H1 (cell line): ENCODE measurements at regions of chr3 and their contacts with region 1.

Region 1: GRCh38 chr3:13229273-13229949 is 156.2 kb upstream of the IQSEC1 start:
- DNase-seq: peak in 1 of 2 experiments; percentile 59
- H3K4me3 ChIP-seq: no peak overlapping the region
- H3K27ac ChIP-seq: no peak overlapping the region
- H3K4me1 ChIP-seq: peaks cover 0 to 3% (median under 1%) of the 10 kb centered on the region in 4 experiments; a peak in 2 of 7 replicates
- H3K27me3 ChIP-seq: no peaks in the 10 kb centered on the region
- CTCF ChIP-seq: peak in 2 of 3 experiments; percentile 78 to 92; a peak in 3 of 4 replicates
- EP300 ChIP-seq: peak in 1 of 2 experiments; percentile 33; a peak in 1 of 3 replicates
- POLR2A ChIP-seq: no peak
- RAD21 ChIP-seq: peak; percentile 65 to 81

Region 2: DNA sequence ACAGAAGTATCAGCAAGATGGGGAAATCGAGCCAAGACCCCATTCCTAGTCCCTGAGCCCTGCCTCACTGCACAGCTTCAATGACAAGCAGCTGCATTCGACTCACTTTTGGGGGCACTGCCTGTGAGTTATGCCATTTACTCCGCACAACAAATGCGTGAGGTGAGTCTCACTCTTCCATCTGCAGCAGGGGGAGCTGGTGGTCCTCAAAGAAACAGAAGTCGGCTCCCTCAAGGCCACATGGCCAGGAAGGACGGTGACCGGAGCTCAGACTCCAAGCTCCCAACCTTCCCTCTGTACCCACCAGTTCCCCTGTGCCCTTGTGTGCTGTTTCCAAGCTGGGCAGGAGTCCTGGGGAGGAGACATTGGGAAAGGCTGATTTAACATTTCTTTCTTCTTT is 28.5 kb before region 1 on chr3:
- CTCF ChIA-PET with region 1: interaction called, 16 read pairs
- POLR2A ChIA-PET with region 1: no interaction called
- DNase-seq: peak in 1 of 2 experiments; percentile 19
- H3K4me3 ChIP-seq: no peak overlapping the region
- H3K27ac ChIP-seq: no peak overlapping the region
- H3K4me1 ChIP-seq: peaks cover 0 to 3% (median under 1%) of the 10 kb centered on the region in 4 experiments; a peak in 5 of 7 replicates
- H3K27me3 ChIP-seq: peaks cover 0 to 4% (median 3%) of the 10 kb centered on the region in 4 experiments; a peak in 4 of 7 replicates
- CTCF ChIP-seq: peak in 2 of 3 experiments; percentile 71 to 72; a peak in 3 of 4 replicates
- EP300 ChIP-seq: no peak
- POLR2A ChIP-seq: no peak
- RAD21 ChIP-seq: peak; percentile 81 to 85

Region 3: DNA sequence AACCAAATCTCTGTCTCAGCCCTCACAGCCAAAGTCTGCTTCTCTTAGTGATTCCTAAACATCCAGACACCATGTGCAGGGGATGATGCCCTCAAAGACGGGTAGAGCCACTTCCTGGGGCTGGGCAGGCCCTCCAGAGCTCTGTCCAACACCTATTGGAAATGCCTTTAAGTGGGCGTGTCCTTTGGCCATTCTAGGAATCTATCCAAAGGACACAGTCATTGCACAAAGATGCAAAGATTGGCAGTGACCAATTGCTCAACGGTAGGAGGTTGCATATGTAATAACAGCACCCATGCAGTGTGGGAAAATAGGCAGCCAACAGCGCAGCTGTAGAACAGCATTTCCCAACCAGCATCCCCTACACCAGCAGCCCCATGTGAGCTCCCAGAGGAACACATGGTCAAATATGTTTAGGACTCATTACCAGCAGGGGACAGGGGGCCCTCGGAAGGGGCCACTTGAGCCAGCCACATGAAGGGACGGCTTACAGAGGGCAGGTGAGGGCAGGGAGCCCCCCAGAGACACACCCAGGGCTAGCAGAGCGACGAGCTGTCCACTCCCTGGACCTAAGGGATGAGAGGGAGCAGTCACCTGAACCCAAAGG is 13.4 kb before region 1 on chr3:
- CTCF ChIA-PET with region 1: interaction called, 15 read pairs
- POLR2A ChIA-PET with region 1: interaction called, 3 read pairs
- DNase-seq: no peak
- H3K4me3 ChIP-seq: no peak overlapping the region
- H3K27ac ChIP-seq: no peak overlapping the region
- H3K4me1 ChIP-seq: peaks cover 0 to 10% (median 2%) of the 10 kb centered on the region in 4 experiments; a peak in 3 of 7 replicates
- H3K27me3 ChIP-seq: no peaks in the 10 kb centered on the region
- CTCF ChIP-seq: no peak
- EP300 ChIP-seq: no peak
- POLR2A ChIP-seq: no peak
- RAD21 ChIP-seq: no peak

Region 4: GRCh38 chr3:13260259-13261103 is 31.1 kb after region 1 on chr3:
- CTCF ChIA-PET with region 1: interaction called, 18 read pairs
- POLR2A ChIA-PET with region 1: no interaction called
- DNase-seq: no peak
- H3K4me3 ChIP-seq: no peak overlapping the region
- H3K27ac ChIP-seq: no peak overlapping the region
- H3K4me1 ChIP-seq: no peaks in the 10 kb centered on the region; a peak in 1 of 7 replicates
- H3K27me3 ChIP-seq: no peaks in the 10 kb centered on the region
- CTCF ChIP-seq: peak in 1 of 3 experiments; percentile 15; a peak in 1 of 4 replicates
- EP300 ChIP-seq: no peak
- POLR2A ChIP-seq: no peak
- RAD21 ChIP-seq: no peak

Region 5: GRCh38 chr3:13518516-13518953 is 289.1 kb after region 1 on chr3:
- CTCF ChIA-PET with region 1: no interaction called
- POLR2A ChIA-PET with region 1: no interaction called
- DNase-seq: no peak
- H3K4me3 ChIP-seq: no peak overlapping the region
- H3K27ac ChIP-seq: no peak overlapping the region
- H3K4me1 ChIP-seq: peaks cover 0 to 2% (median 0%) of the 10 kb centered on the region in 4 experiments; a peak in 1 of 7 replicates
- H3K27me3 ChIP-seq: no peaks in the 10 kb centered on the region; a peak in 1 of 7 replicates
- CTCF ChIP-seq: no peak
- EP300 ChIP-seq: no peak
- POLR2A ChIP-seq: no peak
- RAD21 ChIP-seq: no peak